ENCODE measurements at regions of chr3 and their contacts with region 1.

Region 1: GRCh38 chr3:73602170-73602569 is 22.6 kb downstream of the PDZRN3 start:
- DNase-seq: peak; percentile 78
- H3K4me3 ChIP-seq: no peak overlapping the region
- CTCF ChIP-seq: no peak

Region 2: DNA sequence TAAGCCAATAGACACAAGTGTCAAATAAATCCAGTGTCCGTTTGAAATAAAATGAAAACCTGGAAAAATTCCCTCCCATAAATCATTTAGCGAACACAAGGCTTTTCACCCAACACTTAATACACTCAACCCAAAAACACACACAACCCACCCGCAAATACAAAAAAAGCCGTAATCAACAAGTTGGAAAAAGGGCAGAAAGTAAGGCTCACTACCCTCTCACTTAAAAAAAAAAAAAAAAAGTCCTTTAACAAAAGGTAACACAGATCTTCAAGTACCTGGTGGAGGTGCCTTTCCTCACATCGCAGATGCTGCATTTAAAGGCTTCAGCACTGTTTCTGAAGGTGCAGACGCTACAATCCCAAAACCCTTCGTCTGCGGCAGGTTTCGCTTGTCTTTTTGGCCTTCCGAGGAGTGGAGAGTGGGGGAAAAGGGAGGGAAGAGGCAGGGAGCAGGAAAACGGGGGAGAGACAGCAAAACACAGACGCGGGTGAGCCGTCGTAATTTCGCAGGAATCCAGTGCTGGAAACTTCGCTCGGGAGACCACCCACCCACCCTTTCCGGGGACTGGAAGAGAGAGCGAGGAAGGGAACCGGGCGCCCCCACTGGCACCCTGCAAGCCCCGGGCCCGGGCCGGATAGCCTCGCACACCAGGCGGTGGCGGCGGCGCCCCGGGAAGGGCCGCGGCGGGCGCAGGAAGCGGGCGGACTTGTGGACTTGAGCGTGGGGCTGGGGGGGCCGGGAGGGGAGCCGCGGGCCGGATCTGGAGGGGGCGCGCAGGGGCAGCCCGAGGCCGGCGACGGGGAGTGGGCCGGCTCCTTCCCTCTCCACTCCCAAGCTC is 1155.7 kb before region 1 on chr3:
- in situ Hi-C with region 1: no loop called
- DNase-seq: no peak
- H3K4me3 ChIP-seq: peak within 1 kb of the TSS; percentile 83
- CTCF ChIP-seq: no peak

Region 3: GRCh38 chr3:73536952-73537351 is 65.2 kb before region 1 on chr3:
- in situ Hi-C with region 1: no loop called
- DNase-seq: no peak
- H3K4me3 ChIP-seq: no peak overlapping the region
- CTCF ChIP-seq: no peak

Region 4: DNA sequence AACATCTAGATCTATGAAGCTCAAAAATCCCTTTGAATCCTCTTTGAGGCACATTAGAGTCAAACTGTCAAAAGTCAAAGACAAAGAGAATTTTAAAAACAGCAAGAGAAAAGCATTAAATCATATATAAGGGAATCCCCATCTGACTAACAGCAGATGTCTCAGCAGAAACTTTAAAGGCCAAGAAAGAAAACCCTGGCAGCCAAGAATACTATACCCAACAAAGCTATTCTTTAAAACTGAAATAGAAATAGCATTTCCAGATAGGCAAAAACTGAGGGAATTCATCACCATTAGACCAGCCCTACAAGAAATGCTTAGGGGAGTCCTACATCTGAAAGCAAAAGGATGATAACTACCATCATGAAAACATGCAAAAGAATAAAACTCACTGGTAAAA is 233.8 kb after region 1 on chr3:
- in situ Hi-C with region 1: loop called (anchors 5 kb)
- DNase-seq: no peak
- H3K4me3 ChIP-seq: no peak overlapping the region
- CTCF ChIP-seq: no peak

Measured in astrocyte of the cerebellum (primary cell).